PC-3 (cell line): ENCODE measurements at regions of chr2 and their contacts with region 1.

Region 1: DNA sequence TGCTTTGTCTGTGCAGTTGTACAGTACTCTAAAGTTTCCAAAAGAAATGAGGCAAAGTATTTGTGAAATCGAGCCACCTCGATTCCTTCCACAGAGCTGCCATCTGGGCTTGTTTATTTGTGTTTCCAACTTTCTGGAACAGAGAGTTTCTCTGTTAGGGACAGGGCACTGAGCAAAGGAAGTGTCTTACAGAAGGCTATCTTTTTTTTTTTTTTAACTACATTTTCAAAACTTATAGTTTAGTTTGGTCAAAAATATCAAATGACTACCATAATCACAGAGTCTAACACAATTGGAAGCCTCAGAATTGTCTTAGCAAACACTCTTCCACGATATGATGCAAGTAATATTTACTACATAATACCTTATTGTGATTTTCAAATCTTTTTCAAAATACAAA is 796 bp downstream of the RFTN2 start:
- DNase-seq: no peak
- ATAC-seq: no peak
- H3K4me3 ChIP-seq: no peak overlapping the region
- H3K27ac ChIP-seq: no peak overlapping the region
- H3K4me1 ChIP-seq: peaks cover 6% of the 10 kb centered on the region
- H3K27me3 ChIP-seq: no peaks in the 10 kb centered on the region
- CTCF ChIP-seq: no peak

Region 2: DNA sequence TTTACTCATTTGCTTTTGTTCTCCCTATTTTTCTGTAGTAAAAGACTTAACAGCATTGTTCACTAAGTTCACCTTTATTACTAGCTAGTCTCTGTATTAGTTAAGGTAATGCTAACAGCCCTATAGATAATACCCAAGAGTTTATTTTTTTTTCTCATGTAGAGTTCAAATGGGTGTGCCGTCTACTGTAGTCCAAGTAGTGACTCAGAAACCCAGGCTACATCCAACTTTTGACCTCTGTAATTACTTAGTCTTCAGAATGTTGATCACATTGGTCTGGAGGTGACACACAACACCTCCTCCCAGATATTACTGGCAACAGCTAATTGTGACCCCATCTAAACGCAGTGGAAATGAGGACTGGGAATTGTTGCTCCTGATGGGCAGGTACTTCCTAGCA is 213.5 kb before region 1 on chr2:
- CTCF ChIA-PET with region 1: no interaction called
- POLR2A ChIA-PET with region 1: interaction called, 14 read pairs
- intact Hi-C with region 1: no loop called
- DNase-seq: no peak
- ATAC-seq: peak; percentile 71
- H3K4me3 ChIP-seq: no peak overlapping the region
- H3K27ac ChIP-seq: no peak overlapping the region
- H3K4me1 ChIP-seq: peaks cover 8% of the 10 kb centered on the region; the same call in 1 of the 2 replicates
- H3K27me3 ChIP-seq: no peaks in the 10 kb centered on the region
- CTCF ChIP-seq: no peak